Activated CD4-positive, alpha-beta memory T cell treated with anti-CD3 and anti-CD28 coated beads for 36 hours (primary cell): ENCODE measurements at regions of chr1 and their contacts with region 1.

Region 1: GRCh38 chr1:151098126-151098525 is 27.6 kb downstream of the GABPB2 start:
- DNase-seq: no peak
- H3K4me3 Mint-ChIP-seq: no peak overlapping the region
- H3K27ac Mint-ChIP-seq: no peak overlapping the region
- H3K4me1 Mint-ChIP-seq: no peaks in the 10 kb centered on the region
- H3K27me3 Mint-ChIP-seq: no peaks in the 10 kb centered on the region

Region 2: DNA sequence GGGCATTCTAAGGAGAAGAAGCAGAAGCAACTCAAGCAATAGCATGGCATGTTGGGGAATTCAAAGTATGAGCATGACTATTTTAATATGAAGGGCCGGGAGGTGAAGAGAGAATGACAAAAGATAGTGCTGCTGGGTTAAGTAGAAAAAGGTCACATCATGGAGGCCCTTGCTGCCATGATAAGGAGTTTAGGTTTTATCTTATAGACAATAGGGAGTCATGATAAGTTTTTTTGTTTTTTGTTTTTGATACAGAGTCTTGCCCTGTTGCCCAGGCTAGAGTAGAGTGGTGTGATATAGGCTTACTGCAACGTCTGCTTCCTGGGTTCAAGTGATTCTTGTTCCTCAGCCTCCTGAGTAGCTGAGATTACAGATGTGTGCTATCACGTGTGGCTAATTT is 58.6 kb before region 1 on chr1:
- CTCF ChIA-PET with region 1: no interaction called
- POLR2A ChIA-PET with region 1: no interaction called
- intact Hi-C with region 1: no loop called
- DNase-seq: no peak
- H3K4me3 Mint-ChIP-seq: no peak overlapping the region
- H3K27ac Mint-ChIP-seq: no peak overlapping the region
- H3K4me1 Mint-ChIP-seq: peaks cover 10% of the 10 kb centered on the region
- H3K27me3 Mint-ChIP-seq: no peaks in the 10 kb centered on the region

Region 3: GRCh38 chr1:151085953-151086559 is 12.1 kb before region 1 on chr1:
- CTCF ChIA-PET with region 1: interaction called, 18 read pairs
- POLR2A ChIA-PET with region 1: interaction called, 4 read pairs
- intact Hi-C with region 1: no loop called
- DNase-seq: no peak
- H3K4me3 Mint-ChIP-seq: no peak overlapping the region
- H3K27ac Mint-ChIP-seq: no peak overlapping the region
- H3K4me1 Mint-ChIP-seq: no peaks in the 10 kb centered on the region
- H3K27me3 Mint-ChIP-seq: no peaks in the 10 kb centered on the region

Region 4: DNA sequence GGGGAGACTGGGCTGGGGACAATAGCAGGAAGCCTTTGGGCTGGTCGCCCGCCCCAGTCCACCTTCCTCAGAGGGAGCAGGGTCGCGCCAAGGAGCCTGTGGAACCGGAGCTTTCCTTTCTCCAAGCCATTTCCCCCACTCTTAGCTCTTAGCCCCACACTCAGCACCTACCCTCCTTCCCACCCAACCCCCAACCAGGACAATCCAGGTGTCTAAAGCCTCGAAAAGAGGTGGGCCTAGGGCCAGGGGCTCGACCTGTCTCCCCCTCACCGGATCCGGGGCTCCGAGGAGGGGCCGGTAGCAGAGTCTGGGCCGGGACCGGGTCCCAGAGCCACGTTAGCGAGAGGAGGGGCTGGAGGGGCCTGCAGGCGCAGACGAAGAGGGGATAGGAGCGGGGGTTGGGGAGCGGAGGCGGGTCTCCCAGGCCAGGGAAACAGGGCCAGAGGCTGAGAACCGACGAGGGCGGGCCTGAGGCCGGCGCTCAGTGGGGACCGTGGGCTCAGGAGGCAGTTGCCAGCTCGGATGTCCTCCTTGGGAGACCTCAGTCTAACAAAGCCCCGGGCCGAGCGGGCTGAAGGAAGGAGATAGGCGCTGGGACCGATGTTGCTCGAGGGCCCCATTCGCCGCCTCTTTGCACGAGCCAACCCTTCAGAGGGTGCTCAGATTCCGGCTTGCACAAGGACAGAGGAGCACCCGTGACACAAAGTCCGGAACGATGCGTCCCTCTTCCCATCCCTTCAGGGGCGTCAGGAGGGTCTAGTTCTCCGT is 47.4 kb after region 1 on chr1:
- CTCF ChIA-PET with region 1: interaction called, 16 read pairs
- POLR2A ChIA-PET with region 1: no interaction called
- intact Hi-C with region 1: no loop called
- DNase-seq: peak; percentile 42
- H3K4me3 Mint-ChIP-seq: peak overlapping the region; percentile 77
- H3K27ac Mint-ChIP-seq: no peak overlapping the region
- H3K4me1 Mint-ChIP-seq: peaks cover 6% of the 10 kb centered on the region
- H3K27me3 Mint-ChIP-seq: no peaks in the 10 kb centered on the region

Region 5: DNA sequence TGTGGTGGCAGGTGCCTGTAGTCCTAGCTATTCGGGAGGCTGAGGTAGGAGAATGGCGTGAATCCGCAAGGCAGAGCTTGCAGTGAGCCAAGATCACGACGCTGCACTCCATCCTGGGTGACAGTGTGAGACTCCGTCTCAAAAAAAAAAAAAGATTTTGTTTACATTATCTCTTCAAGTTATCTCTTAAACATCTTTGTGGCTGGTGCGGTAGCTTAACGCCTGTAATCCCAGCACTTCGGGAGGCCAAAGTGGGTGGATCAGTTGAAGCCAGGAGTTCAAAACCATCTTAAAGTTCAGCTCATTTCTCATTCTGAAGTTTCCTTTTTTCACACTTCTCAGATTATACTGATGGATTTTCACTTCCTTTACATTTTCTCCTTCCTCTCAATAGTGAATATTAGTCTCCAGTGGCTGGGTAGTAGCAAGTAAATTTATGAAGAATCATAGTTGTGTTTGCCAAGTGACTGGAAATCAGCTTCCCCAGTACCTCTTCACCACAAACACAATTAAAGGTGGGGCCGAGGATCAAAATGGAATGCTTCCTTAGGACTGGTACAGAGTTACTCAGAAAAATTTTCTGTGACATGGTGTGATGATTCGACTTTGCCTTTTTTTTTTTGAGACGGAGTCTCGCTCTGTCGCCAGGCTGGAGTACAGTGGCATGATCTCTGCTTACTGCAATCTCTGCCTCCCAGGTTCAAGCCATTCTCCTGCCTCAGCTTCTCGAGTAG is 114.0 kb after region 1 on chr1:
- CTCF ChIA-PET with region 1: interaction called, 13 read pairs
- POLR2A ChIA-PET with region 1: interaction called, 3 read pairs
- intact Hi-C with region 1: no loop called
- DNase-seq: peak; percentile 29
- H3K4me3 Mint-ChIP-seq: no peak overlapping the region
- H3K27ac Mint-ChIP-seq: peak overlapping the region; percentile 16
- H3K4me1 Mint-ChIP-seq: peaks cover 27% of the 10 kb centered on the region
- H3K27me3 Mint-ChIP-seq: no peaks in the 10 kb centered on the region

Region 6: GRCh38 chr1:151340870-151341754 is 243.0 kb after region 1 on chr1:
- CTCF ChIA-PET with region 1: interaction called, 12 read pairs
- POLR2A ChIA-PET with region 1: no interaction called
- intact Hi-C with region 1: no loop called
- DNase-seq: peak; percentile 63
- H3K4me3 Mint-ChIP-seq: no peak overlapping the region
- H3K27ac Mint-ChIP-seq: peak overlapping the region; percentile 29
- H3K4me1 Mint-ChIP-seq: peaks cover 25% of the 10 kb centered on the region
- H3K27me3 Mint-ChIP-seq: no peaks in the 10 kb centered on the region

Region 7: DNA sequence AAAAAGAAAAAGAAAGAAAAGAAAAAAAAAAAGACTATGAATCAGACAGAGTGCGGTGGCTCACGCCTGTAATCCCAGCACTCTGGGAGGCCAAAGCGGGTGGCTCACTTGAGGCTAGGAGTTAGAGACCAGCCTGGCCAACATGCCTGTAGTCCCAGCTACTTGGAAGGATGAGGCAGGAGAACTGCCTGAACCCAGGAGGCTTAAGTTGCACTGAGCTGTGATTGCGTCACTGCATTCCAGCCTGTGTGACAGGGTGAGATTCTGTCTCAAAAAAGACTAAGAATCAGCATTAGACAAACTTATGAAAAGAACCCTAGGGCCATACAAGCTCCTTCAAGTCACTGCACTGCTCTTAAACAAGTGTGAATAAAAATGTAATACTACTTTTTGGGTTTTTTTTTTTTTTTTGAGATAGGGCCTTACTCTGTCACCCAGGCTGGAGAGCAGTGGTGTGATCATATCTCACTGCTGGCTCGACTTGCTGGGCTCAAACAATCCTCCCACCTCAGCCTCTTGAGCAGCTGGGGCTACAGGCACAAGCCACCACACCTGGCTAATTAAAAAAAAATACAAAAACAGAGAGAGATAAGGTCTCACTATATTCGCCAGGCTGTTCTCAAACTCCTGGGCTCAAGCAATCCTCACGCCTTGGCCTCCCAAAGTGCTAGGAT is 318.2 kb after region 1 on chr1:
- CTCF ChIA-PET with region 1: no interaction called
- POLR2A ChIA-PET with region 1: no interaction called
- intact Hi-C with region 1: no loop called
- DNase-seq: no peak
- H3K4me3 Mint-ChIP-seq: no peak overlapping the region
- H3K27ac Mint-ChIP-seq: no peak overlapping the region
- H3K4me1 Mint-ChIP-seq: no peaks in the 10 kb centered on the region
- H3K27me3 Mint-ChIP-seq: no peaks in the 10 kb centered on the region